PC-9 (cell line): ENCODE measurements at regions of chr2 and their contacts with region 1.

Region 1: GRCh38 chr2:218292048-218293014 is at the start of gene TMBIM1:
- DNase-seq: peak; percentile 38 to 85
- H3K4me3 ChIP-seq: peak within 1 kb of the TSS; percentile 89
- H3K27ac ChIP-seq: peak within 1 kb of the TSS; percentile 96
- H3K4me1 ChIP-seq: peaks cover 87% of the 10 kb centered on the region
- H3K27me3 ChIP-seq: no peaks in the 10 kb centered on the region
- CTCF ChIP-seq: peak; percentile 66
- total RNA-seq, gene TMBIM1: 172 and 187 TPM in 2 replicates

Region 2: GRCh38 chr2:218278531-218279360 is 13.6 kb before region 1 on chr2:
- CTCF ChIA-PET with region 1: interaction called, 26 read pairs
- POLR2A ChIA-PET with region 1: interaction called, 15 read pairs
- intact Hi-C with region 1: no loop called
- DNase-seq: no peak
- H3K4me3 ChIP-seq: no peak overlapping the region
- H3K27ac ChIP-seq: no peak overlapping the region
- H3K4me1 ChIP-seq: peaks cover 39% of the 10 kb centered on the region
- H3K27me3 ChIP-seq: no peaks in the 10 kb centered on the region
- CTCF ChIP-seq: no peak

Region 3: GRCh38 chr2:218310925-218311540 is 18.7 kb after region 1 on chr2:
- CTCF ChIA-PET with region 1: no interaction called
- POLR2A ChIA-PET with region 1: no interaction called
- intact Hi-C with region 1: no loop called
- DNase-seq: no peak
- H3K4me3 ChIP-seq: no peak overlapping the region
- H3K27ac ChIP-seq: no peak overlapping the region
- H3K4me1 ChIP-seq: peaks cover 21% of the 10 kb centered on the region
- H3K27me3 ChIP-seq: no peaks in the 10 kb centered on the region
- CTCF ChIP-seq: no peak

Region 4: GRCh38 chr2:218568190-218569037 is 276.1 kb after region 1 on chr2 and contains the starts of genes CNOT9 and USP37:
- CTCF ChIA-PET with region 1: no interaction called
- POLR2A ChIA-PET with region 1: no interaction called
- intact Hi-C with region 1: loop called (anchors 5 kb)
- DNase-seq: peak; percentile 91 to 99
- H3K4me3 ChIP-seq: peak within 1 kb of the TSS; percentile 90
- H3K27ac ChIP-seq: peak within 1 kb of the TSS; percentile 81
- H3K4me1 ChIP-seq: peaks cover 29% of the 10 kb centered on the region
- H3K27me3 ChIP-seq: no peaks in the 10 kb centered on the region
- CTCF ChIP-seq: no peak
- total RNA-seq, gene CNOT9: 45.8 and 46.0 TPM in 2 replicates
- total RNA-seq, gene USP37: 13.1 and 15.4 TPM in 2 replicates